Right ventricle myocardium superior (tissue), 1 donor: ENCODE measurements at regions of chr19 and their contacts with region 1.

Region 1: DNA sequence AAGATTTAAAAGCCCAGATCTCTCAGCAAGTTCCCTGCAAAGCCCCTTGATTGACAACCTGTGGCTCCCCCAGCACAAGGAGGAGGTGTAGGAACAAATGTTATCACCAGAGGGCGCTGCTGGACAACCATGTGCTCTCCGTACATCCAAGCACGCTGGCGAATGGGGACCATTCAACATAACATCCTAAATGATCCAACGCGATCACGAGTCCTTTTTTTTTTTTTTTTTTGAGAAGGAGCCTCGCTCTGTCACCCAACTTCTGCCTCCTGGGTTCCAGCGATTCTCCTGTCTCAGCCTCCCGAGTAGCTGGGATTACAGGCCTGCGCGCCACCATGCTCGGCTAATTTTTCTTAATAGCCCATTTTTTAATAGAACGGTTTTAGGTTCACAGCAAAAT is 52.0 kb downstream of the NWD1 start:
- DNase-seq: peak; percentile 79
- ATAC-seq: peak; percentile 93

Region 2: DNA sequence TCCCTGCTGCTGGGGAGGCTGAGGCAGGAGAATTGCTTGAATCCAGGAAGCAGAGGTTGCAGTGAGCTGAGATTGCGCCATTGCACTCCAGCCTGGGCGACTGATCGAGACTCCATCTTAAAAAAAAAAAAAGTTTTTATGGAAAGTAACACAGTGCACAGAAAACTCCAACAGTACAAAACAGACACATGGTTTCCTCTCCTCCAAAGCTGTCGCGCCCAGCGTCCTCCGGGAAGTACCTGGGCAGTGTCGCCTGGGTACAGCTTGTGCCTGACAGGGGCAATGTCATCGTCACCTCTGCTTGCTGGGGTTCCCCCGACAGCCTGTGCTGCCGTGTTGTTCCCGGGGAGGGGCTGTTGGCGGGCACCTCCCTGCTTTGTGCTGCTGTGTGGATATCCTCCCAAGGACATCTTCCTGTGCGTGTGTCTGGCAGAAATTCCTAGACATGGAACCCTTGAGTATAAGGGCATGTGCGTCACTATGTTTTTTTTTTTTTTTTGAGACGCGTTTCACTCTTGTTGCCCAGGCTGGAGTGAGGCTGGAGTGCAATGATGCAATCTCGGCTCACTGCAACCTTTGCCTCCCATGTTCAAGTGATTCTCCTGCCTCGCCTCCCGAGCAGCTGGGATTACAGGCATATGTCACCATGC is 114.7 kb after region 1 on chr19:
- intact Hi-C with region 1: no loop called
- DNase-seq: peak; percentile 77
- ATAC-seq: peak; percentile 76

Region 3: GRCh38 chr19:16899566-16900075 is 128.0 kb after region 1 on chr19:
- intact Hi-C with region 1: loop called (anchors 10 kb)
- DNase-seq: peak; percentile 71
- ATAC-seq: no peak

Region 4: GRCh38 chr19:16988661-16989060 is 217.0 kb after region 1 on chr19:
- intact Hi-C with region 1: no loop called
- DNase-seq: no peak
- ATAC-seq: no peak

Region 5: DNA sequence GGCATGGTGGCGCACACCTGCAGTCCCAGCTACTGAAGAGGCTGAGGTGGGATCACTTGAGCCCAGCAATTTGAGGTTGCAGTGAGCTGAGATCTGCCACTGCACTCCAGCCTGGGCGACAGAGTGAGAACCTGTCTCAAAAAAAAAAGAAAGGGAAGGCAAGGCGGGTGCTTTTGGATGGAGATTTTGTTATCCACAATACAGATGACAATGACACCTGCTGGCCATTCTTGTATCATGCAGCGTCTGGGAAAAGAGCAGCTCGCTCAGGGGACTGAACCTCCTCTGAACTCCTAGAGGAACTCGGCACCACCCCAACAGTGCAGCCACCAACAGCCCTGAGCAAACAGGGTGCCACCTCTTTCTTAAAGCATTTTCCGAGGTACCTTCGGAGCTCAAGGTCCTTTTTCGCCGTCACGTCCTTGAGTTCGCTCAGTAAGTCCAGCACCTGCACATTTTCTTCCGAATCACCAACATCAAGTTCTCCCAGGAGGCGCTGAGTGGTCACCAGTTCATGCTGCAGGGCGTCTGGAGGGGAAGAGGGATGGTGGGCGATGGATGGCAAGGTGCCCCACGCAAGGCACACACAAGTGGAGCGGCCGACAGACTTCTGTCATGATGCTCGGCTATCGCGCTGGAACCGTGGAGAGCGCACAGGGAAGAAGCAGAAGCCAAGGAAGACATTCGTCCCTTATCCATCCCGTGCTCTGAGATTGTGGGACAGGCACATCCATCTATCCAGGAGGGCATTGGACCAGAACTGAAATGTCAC is 281.0 kb after region 1 on chr19:
- intact Hi-C with region 1: loop called (anchors 2 kb)
- DNase-seq: no peak
- ATAC-seq: peak; percentile 51